HEK293T (cell line): ENCODE measurements at regions of chr5 and their contacts with region 1.

Region 1: GRCh38 chr5:98631311-98632054 is 142.0 kb upstream of the RGMB start:
- DNase-seq: no peak

Region 2: GRCh38 chr5:98604721-98605425 is 26.6 kb before region 1 on chr5:
- CTCF ChIA-PET with region 1: no interaction called
- POLR2A ChIA-PET with region 1: no interaction called
- DNase-seq: no peak

Region 3: DNA sequence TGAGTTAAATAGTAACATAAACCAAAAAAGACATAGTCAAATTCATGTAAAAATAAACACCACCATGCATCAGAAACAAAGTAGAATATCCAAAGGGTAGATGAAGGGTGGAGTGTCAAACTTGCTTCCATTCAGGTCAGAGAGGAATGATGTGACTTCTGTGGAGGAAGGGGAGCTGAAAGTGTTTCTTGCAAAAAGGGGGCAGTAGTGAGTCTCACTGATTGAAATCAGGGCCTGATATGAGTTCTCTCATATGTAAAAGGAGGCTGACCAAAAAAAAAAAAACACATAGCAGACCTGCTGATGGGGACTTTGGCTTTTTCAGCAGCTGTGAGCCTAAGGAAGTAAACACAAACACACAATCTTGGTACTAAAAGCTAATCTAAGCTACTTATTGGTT is 103.2 kb after region 1 on chr5:
- CTCF ChIA-PET with region 1: no interaction called
- POLR2A ChIA-PET with region 1: no interaction called
- DNase-seq: peak; percentile 9

Region 4: GRCh38 chr5:98776066-98776705 is 144.7 kb after region 1 on chr5:
- CTCF ChIA-PET with region 1: interaction called, 17 read pairs
- POLR2A ChIA-PET with region 1: no interaction called
- DNase-seq: no peak